T-cell (primary cell): ENCODE measurements at regions of chr6 and their contacts with region 1.

Region 1: DNA sequence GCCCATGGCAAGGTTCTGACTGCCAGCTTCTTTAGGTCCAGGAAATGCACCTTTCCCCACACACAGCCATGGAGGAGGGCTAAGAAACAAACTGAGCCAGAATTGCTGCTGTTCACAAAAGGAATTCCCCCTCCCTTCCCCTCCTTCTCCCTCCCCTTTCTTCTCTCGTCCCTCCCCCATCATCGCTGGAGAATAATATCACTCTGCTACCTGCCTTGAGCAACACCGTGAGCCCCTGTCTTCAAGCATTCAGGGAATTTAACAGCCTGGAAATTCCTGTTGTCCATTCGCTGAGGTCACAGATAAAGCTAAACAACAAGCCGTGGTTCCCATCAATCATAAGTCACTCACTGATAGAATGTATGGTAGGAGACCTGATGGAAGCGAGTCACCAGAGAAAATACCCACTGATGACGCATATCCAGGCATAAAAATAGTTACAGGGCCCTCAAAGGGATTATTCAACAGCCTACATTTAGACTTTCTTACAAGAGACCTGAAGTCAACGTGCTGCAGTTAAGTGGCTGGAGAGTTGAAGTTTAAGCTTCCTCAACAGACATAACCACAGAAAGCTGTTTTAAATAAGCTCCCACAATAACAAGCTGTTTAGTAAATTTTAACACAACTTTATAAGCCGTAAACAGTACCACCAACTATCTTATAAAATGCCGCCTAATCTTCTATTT is 59.7 kb downstream of the HIVEP2 start:
- DNase-seq: peak in 31 of 35 experiments; percentile 17 to 90 (median 49)
- ATAC-seq: peak; percentile 82 to 90 (median 86)
- H3K4me3 ChIP-seq: peak overlapping the region; percentile 33 to 54
- H3K4me3 Mint-ChIP-seq: peak overlapping the region; percentile 87 to 94 (median 94)
- H3K27ac ChIP-seq: peak overlapping the region; percentile 89
- H3K27ac Mint-ChIP-seq: peak overlapping the region; percentile 97 to 98
- H3K4me1 ChIP-seq: peaks cover 38 to 65% of the 10 kb centered on the region in 2 experiments
- H3K4me1 Mint-ChIP-seq: peaks cover 93 to 98% (median 97%) of the 10 kb centered on the region in 3 donors
- H3K27me3 ChIP-seq: no peaks in the 10 kb centered on the region
- H3K27me3 Mint-ChIP-seq: no peaks in the 10 kb centered on the region

Region 2: DNA sequence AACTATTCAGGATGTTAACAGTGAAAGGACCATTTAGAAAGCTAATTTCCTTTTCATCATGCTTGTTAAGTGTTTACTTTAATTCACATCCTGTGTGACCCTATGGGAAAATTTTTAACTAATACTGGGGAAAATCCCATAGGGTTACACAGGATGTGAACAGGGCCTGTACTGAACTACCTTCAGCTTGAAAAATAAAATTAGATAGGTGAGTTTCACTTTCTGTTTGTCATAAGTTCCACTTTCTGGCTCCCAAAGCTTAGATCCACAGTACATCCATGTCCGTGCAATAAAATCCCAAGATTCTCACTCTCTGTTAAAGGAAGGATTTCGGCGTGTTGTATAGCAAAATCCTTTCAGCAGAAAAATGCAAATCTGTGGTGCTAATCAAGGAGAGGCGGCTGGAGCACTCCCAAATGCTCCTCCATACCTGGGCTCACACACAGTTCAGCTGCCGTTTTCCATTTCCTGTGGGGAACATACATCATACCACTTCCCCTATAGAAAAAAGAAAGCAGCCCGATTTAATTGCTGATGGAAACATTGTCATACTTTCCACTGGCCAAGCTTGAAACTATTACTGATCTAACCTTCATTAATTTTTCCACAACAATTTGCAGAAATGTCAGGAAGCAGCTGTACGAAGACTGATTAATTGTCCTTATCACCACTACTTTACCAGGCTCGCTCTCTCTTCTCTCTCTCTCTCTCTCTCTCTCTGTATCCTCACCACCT is 65.6 kb before region 1 on chr6:
- CTCF ChIA-PET with region 1: interaction called, 6 to 11 read pairs
- POLR2A ChIA-PET with region 1: interaction called, 3 read pairs
- DNase-seq: peak in 3 of 35 experiments; percentile 19 to 77 (median 23)
- ATAC-seq: peak; percentile 49 to 78 (median 54)
- H3K4me3 ChIP-seq: peak overlapping the region; percentile 40 to 49
- H3K4me3 Mint-ChIP-seq: peak overlapping the region; percentile 80 to 82 (median 82)
- H3K27ac ChIP-seq: peak overlapping the region; percentile 89
- H3K27ac Mint-ChIP-seq: peak overlapping the region; percentile 85 to 94
- H3K4me1 ChIP-seq: peaks cover 40 to 49% of the 10 kb centered on the region in 2 experiments
- H3K4me1 Mint-ChIP-seq: peaks cover 81 to 85% (median 82%) of the 10 kb centered on the region in 3 donors
- H3K27me3 ChIP-seq: no peaks in the 10 kb centered on the region
- H3K27me3 Mint-ChIP-seq: no peaks in the 10 kb centered on the region

Region 3: GRCh38 chr6:142842418-142843261 is 42.7 kb before region 1 on chr6:
- CTCF ChIA-PET with region 1: interaction called, 3 to 4 read pairs
- POLR2A ChIA-PET with region 1: interaction called, 3 to 14 read pairs
- DNase-seq: peak in 11 of 35 experiments; percentile 18 to 82 (median 33)
- ATAC-seq: peak; percentile 67 to 75 (median 71)
- H3K4me3 ChIP-seq: peak overlapping the region; percentile 15 to 45
- H3K4me3 Mint-ChIP-seq: peak overlapping the region; percentile 75 to 89 (median 79)
- H3K27ac ChIP-seq: peak overlapping the region; percentile 94
- H3K27ac Mint-ChIP-seq: peak overlapping the region; percentile 90 to 97
- H3K4me1 ChIP-seq: peaks cover 37 to 65% of the 10 kb centered on the region in 2 experiments
- H3K4me1 Mint-ChIP-seq: peaks cover 91 to 93% (median 92%) of the 10 kb centered on the region in 3 donors
- H3K27me3 ChIP-seq: no peaks in the 10 kb centered on the region
- H3K27me3 Mint-ChIP-seq: no peaks in the 10 kb centered on the region

Region 4: GRCh38 chr6:142902636-142903053 is 17.3 kb after region 1 on chr6:
- CTCF ChIA-PET with region 1: interaction called, 3 to 11 read pairs
- POLR2A ChIA-PET with region 1: interaction called, 4 to 28 read pairs
- DNase-seq: peak; percentile 62 to 91 (median 81)
- ATAC-seq: peak; percentile 68 to 79 (median 76)
- H3K4me3 ChIP-seq: peak overlapping the region; percentile 23 to 36
- H3K4me3 Mint-ChIP-seq: peak overlapping the region in 2 of 3 donors; percentile 71 to 76
- H3K27ac ChIP-seq: peak overlapping the region; percentile 97
- H3K27ac Mint-ChIP-seq: no peak overlapping the region
- H3K4me1 ChIP-seq: peaks cover 50 to 61% of the 10 kb centered on the region in 2 experiments
- H3K4me1 Mint-ChIP-seq: peaks cover 14 to 54% (median 17%) of the 10 kb centered on the region in 3 donors
- H3K27me3 ChIP-seq: no peaks in the 10 kb centered on the region
- H3K27me3 Mint-ChIP-seq: no peaks in the 10 kb centered on the region

Region 5: GRCh38 chr6:142934106-142934505 is 48.8 kb after region 1 on chr6:
- CTCF ChIA-PET with region 1: interaction called in 1 of 2 experiments, 15 read pairs
- POLR2A ChIA-PET with region 1: interaction called, 6 to 8 read pairs
- DNase-seq: no peak
- ATAC-seq: no peak
- H3K4me3 ChIP-seq: no peak overlapping the region
- H3K4me3 Mint-ChIP-seq: peak overlapping the region; percentile 17 to 56 (median 37)
- H3K27ac ChIP-seq: peak overlapping the region; percentile 77
- H3K27ac Mint-ChIP-seq: peak overlapping the region; percentile 89 to 94
- H3K4me1 ChIP-seq: peaks cover 31 to 41% of the 10 kb centered on the region in 2 experiments
- H3K4me1 Mint-ChIP-seq: peaks cover 93 to 96% (median 94%) of the 10 kb centered on the region in 3 donors
- H3K27me3 ChIP-seq: no peaks in the 10 kb centered on the region
- H3K27me3 Mint-ChIP-seq: no peaks in the 10 kb centered on the region

Region 6: DNA sequence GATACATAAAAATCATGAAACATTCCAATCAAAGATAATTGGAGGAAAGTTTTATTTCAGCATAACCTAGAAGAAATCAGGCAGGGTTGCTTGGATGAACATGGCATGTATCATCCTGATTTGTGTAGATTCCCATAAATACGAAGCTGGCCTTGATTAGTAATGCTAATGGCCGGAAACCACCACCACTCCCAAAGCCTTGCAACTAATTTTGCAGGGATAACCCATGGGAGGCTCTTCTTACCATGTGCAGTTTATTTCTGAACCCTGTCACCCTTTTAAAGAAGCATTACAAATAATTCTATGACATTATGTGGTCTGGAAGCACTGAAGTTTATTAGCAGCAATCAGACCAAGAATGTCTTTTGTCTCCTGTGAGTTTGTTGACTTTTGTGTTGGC is 256.1 kb after region 1 on chr6:
- CTCF ChIA-PET with region 1: no interaction called
- POLR2A ChIA-PET with region 1: no interaction called
- DNase-seq: no peak
- ATAC-seq: no peak
- H3K4me3 ChIP-seq: no peak overlapping the region
- H3K4me3 Mint-ChIP-seq: no peak overlapping the region
- H3K27ac ChIP-seq: no peak overlapping the region
- H3K27ac Mint-ChIP-seq: no peak overlapping the region
- H3K4me1 ChIP-seq: peaks cover 4 to 6% of the 10 kb centered on the region in 2 experiments
- H3K4me1 Mint-ChIP-seq: peaks cover 14 to 19% (median 18%) of the 10 kb centered on the region in 3 donors
- H3K27me3 ChIP-seq: no peaks in the 10 kb centered on the region
- H3K27me3 Mint-ChIP-seq: no peaks in the 10 kb centered on the region